ENCODE measurements at regions of chr4 and their contacts with region 1.

Region 1: DNA sequence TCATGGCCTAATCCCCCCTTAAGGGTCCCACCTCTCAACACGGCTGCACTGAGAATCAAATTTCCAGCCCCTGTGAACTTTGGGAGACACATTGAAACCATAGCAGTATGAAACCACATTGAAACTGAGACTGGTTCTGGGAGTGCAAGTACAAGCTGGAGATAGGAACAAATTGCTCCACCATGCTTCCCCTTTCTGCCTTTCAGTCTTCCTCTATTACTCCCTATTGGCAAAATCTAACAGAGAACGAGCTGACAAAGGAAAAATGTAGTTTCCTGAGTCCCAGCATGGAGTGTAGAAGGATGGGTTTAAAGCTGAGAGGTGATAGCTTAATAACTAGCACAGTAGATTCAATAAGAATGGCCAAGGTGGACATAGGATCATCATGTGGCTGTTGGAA is 161.7 kb upstream of the RPL34 start:
- DNase-seq: no peak
- H3K4me3 ChIP-seq: no peak overlapping the region
- H3K27ac ChIP-seq: no peak overlapping the region
- H3K4me1 ChIP-seq: no peaks in the 10 kb centered on the region
- H3K27me3 ChIP-seq: no peaks in the 10 kb centered on the region
- CTCF ChIP-seq: no peak
- POLR2A ChIP-seq: no peak

Region 2: DNA sequence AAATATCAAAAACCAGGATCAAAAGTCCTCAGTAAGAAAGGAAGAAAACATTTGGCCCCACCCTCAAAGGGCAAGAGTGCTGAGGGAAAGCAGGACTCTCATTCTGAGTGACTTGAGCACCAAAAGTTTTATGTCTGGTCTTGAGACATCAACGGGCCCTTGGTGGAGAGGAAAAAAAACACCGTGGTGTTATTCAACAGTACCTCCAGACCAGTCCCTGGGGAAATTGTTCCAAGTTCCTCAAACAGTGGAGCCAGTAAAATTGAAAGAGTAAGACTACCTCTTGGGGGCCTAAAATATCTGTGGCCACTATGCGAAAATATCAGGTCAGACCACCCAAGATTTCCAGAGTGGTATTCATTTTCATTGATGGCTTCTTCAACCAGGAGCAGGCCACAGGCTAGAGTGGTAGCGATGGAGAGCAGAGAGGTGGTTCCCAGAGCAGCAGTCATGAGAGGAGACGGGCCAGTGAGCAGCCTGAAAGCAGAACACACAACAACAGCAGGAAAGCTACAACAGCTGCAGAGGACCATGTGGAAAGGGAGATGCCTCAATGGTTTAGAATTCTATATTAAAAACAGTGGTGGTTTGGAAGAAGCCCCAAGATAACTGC is 98.0 kb after region 1 on chr4:
- intact Hi-C with region 1: no loop called
- DNase-seq: no peak
- H3K4me3 ChIP-seq: no peak overlapping the region
- H3K27ac ChIP-seq: no peak overlapping the region
- H3K4me1 ChIP-seq: no peaks in the 10 kb centered on the region
- H3K27me3 ChIP-seq: no peaks in the 10 kb centered on the region
- CTCF ChIP-seq: no peak
- POLR2A ChIP-seq: no peak

Region 3: GRCh38 chr4:109251396-109251795 is 792.7 kb after region 1 on chr4:
- intact Hi-C with region 1: loop called (anchors 5 kb)
- DNase-seq: no peak
- H3K4me3 ChIP-seq: no peak overlapping the region
- H3K27ac ChIP-seq: no peak overlapping the region
- H3K4me1 ChIP-seq: no peaks in the 10 kb centered on the region
- H3K27me3 ChIP-seq: no peaks in the 10 kb centered on the region
- CTCF ChIP-seq: no peak
- POLR2A ChIP-seq: no peak